ENCODE measurements at regions of chr1 and their contacts with region 1.

Region 1: DNA sequence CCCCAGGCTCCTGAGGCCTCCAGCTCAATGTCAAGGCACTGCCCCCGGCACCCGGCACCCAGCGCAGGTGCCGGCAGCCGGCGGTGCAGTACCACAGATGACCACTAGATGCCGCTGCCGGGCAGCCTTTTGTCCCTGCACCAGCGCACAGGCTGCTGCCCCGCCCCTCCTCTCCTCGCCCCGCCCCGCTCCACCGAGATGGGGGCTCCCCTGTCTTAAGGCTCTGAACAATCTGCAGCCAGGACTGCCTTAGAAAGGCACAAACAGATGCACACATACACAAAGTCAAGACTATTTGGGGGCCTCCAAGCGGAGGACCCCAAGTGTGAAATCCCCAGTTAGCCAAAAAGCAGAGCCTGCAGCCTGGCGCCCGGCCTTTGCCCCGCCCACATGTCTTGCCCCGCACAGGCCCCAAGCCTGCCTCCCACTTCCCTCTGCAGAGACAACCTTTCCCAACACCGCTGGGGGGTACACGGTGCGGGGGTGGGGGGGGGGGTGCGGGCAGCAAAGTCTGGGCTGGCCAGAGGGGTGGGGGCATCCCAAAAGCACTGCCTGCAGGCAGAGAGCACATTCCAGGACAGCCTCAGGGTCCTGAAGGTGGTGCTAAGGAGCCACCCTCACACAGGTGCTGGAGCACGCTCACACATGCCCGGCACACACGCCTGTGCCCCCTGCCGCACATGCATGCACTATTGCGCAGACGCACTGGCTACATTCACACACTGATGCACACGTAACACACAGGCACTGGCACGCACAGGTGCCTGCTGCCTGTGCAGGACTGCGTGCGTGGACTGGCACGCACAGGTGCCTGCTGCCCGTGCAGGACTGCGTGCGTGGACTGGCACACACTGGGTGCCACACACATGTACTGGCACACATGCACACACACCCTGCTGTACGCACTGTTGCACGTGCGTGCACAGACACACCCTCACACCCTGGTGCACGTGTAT is 37.1 kb downstream of the ARHGEF16 start:
- DNase-seq: peak; percentile 87
- ATAC-seq: peak; percentile 85
- H3K4me3 Mint-ChIP-seq: peak overlapping the region; percentile 67
- H3K27ac Mint-ChIP-seq: no peak overlapping the region
- H3K4me1 Mint-ChIP-seq: peaks cover 2% of the 10 kb centered on the region; the same call in 1 of the 2 replicates
- H3K27me3 Mint-ChIP-seq: no peaks in the 10 kb centered on the region; the same call in none of the 2 replicates
- CTCF ChIP-seq: peak; percentile 100

Region 2: DNA sequence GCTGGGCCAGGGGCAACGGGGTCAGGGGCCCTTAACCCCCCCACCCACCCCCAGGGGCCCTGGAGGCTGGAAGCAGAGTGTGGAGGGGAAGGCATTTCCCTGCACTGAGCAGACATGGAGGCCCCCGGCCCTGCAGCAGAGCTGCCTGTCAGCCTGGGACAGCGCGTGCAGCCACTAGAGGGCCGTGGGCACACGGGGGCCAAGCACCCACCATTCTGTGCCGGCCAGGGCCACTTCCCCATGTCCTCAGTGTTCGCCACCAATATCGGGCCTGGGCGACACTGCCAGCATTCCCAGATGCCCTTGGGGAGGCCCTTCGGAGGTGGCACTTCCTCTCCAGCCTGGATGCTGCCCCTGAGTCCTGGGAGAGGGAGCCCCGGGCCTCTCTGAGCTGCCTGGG is 60.3 kb before region 1 on chr1:
- CTCF ChIA-PET with region 1: interaction called, 12 read pairs
- POLR2A ChIA-PET with region 1: no interaction called
- DNase-seq: peak; percentile 55
- ATAC-seq: peak; percentile 91
- H3K4me3 Mint-ChIP-seq: no peak overlapping the region
- H3K27ac Mint-ChIP-seq: no peak overlapping the region
- H3K4me1 Mint-ChIP-seq: peaks cover 3% of the 10 kb centered on the region; the same call in 1 of the 2 replicates
- H3K27me3 Mint-ChIP-seq: no peaks in the 10 kb centered on the region
- CTCF ChIP-seq: no peak

Region 3: DNA sequence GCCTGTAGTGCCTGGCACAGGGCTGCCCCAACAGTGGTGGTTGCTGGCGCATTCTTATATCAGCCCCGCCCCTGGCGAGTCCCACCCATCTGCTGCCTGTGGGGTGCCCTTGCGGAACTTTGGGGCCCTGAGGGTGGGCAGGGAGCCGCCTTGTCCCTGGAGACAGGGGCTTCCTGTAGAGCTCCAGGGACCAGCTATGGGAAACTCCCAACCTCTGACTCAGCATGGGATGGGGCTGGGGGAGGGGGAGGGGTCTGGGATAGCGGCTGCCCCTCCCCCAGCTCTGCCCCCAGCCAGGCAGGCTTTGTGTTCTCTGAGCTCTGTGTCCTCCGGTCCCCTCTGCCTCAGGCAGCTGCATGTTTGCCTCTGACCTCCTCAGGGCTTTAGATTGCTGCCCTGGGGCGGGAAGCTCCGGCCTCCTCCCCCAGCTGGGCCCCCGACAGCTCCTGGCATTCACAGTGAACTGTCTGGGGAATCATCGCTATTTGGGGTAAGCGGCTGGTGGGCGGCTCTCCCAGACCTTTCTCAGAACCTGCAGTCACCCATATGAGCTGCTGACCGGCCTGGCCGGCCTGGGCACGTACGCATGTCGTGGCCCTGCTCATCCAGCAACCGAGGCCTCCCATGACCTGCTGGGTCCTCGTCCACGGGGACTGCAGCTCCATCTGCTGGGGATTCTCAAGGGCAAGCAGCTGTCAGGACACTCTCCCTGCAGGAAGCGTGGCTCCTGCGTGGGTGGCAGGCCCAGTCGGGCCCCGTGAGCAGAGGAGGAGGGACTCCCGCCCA is 20.1 kb before region 1 on chr1:
- CTCF ChIA-PET with region 1: interaction called, 43 read pairs
- POLR2A ChIA-PET with region 1: no interaction called
- DNase-seq: peak; percentile 77
- ATAC-seq: peak; percentile 82
- H3K4me3 Mint-ChIP-seq: no peak overlapping the region
- H3K27ac Mint-ChIP-seq: peak overlapping the region; percentile 70; the same call in 1 of the 2 replicates
- H3K4me1 Mint-ChIP-seq: peaks cover 17% of the 10 kb centered on the region
- H3K27me3 Mint-ChIP-seq: no peaks in the 10 kb centered on the region
- CTCF ChIP-seq: no peak

Region 4: GRCh38 chr1:3518256-3518655 is 26.7 kb after region 1 on chr1:
- CTCF ChIA-PET with region 1: interaction called, 24 read pairs
- POLR2A ChIA-PET with region 1: no interaction called
- DNase-seq: peak; percentile 67
- ATAC-seq: peak; percentile 36; the same call in 1 of the 2 replicates
- H3K4me3 Mint-ChIP-seq: no peak overlapping the region
- H3K27ac Mint-ChIP-seq: no peak overlapping the region
- H3K4me1 Mint-ChIP-seq: no peaks in the 10 kb centered on the region
- H3K27me3 Mint-ChIP-seq: no peaks in the 10 kb centered on the region
- CTCF ChIP-seq: peak; percentile 95

Region 5: DNA sequence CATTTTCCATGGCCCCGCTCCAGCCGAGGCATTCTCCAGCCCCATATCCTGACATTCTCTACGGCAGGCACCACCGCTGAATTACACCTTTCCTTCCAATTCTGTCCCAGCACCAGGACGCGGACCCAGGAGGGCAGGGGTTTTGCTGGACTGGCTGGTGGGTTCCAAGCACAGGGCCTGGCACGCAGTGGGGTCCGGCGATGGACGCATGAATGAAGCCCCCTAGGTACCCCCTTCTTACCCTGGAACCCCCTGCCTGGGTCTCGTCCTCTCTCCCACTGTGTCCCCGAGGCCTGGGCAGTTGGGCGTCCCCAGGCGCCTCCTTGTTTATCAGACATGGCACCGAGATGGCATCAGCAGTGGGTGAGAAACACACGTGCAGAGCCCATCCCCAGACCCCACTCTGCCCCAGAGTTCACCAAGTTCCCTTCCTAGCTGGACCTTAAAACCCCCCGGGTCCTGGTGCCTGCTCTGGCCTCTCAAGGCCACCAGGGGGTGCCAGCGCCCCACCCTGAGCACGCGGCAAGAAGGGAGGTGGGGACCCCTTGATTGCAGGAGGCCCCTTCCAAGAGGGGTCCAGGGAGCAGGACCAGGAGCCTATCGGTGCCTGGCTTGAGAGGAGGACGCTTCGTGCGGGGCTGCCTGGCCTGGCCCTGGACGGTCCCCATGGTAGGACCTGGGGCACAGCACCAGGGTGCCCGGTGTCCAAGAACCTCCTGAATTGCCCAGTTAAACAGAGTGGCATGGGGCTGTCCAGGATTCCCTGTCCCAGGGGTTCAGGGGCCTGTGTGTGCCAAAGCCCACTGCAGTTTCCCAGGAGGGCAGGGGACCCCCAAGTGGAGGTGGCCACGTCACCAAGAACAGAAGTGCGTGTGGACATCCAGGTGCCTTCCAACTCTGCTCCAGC is 73.6 kb after region 1 on chr1:
- CTCF ChIA-PET with region 1: interaction called, 12 read pairs
- POLR2A ChIA-PET with region 1: no interaction called
- DNase-seq: peak; percentile 71
- ATAC-seq: peak; percentile 87
- H3K4me3 Mint-ChIP-seq: no peak overlapping the region
- H3K27ac Mint-ChIP-seq: no peak overlapping the region
- H3K4me1 Mint-ChIP-seq: no peaks in the 10 kb centered on the region
- H3K27me3 Mint-ChIP-seq: no peaks in the 10 kb centered on the region
- CTCF ChIP-seq: peak; percentile 89

Region 6: GRCh38 chr1:3624200-3625136 is 132.9 kb after region 1 on chr1 and contains the start of gene TPRG1L:
- CTCF ChIA-PET with region 1: interaction called, 59 read pairs
- POLR2A ChIA-PET with region 1: no interaction called
- DNase-seq: peak; percentile 99
- ATAC-seq: peak; percentile 95
- H3K4me3 Mint-ChIP-seq: peak within 1 kb of the TSS; percentile 90
- H3K27ac Mint-ChIP-seq: peak within 1 kb of the TSS; percentile 41
- H3K4me1 Mint-ChIP-seq: peaks cover 12% of the 10 kb centered on the region
- H3K27me3 Mint-ChIP-seq: peaks cover 3% of the 10 kb centered on the region; the same call in 1 of the 2 replicates
- CTCF ChIP-seq: no peak
- total RNA-seq, gene TPRG1L: 20.9 to 22.3 TPM (median 20.9 TPM) in 3 replicates

Measured in WTC11 (cell line).